ENCODE measurements at regions of chr3 and their contacts with region 1.

Region 1: GRCh38 chr3:138417559-138417982 is 16.8 kb upstream of the ESYT3 start:
- DNase-seq: peak; percentile 70 to 79
- ATAC-seq: peak; percentile 97 to 99
- H3K4me3 ChIP-seq: no peak overlapping the region
- H3K27ac ChIP-seq: no peak overlapping the region
- H3K4me1 ChIP-seq: no peaks in the 10 kb centered on the region
- CTCF ChIP-seq: peak; percentile 73
- EP300 ChIP-seq: no peak
- POLR2A ChIP-seq: no peak
- RAD21 ChIP-seq: peak; percentile 77 to 80

Region 2: GRCh38 chr3:138199851-138200250 is 217.7 kb before region 1 on chr3:
- CTCF ChIA-PET with region 1: no interaction called
- POLR2A ChIA-PET with region 1: no interaction called
- DNase-seq: no peak
- ATAC-seq: no peak
- H3K4me3 ChIP-seq: no peak overlapping the region
- H3K27ac ChIP-seq: no peak overlapping the region
- H3K4me1 ChIP-seq: no peaks in the 10 kb centered on the region
- CTCF ChIP-seq: no peak
- EP300 ChIP-seq: no peak
- POLR2A ChIP-seq: no peak
- RAD21 ChIP-seq: no peak

Region 3: GRCh38 chr3:138348754-138349739 is 68.5 kb before region 1 on chr3:
- CTCF ChIA-PET with region 1: interaction called, 10 read pairs
- POLR2A ChIA-PET with region 1: no interaction called
- DNase-seq: peak; percentile 20 to 22
- ATAC-seq: peak; percentile 63 to 64
- H3K4me3 ChIP-seq: peak overlapping the region; percentile 65
- H3K27ac ChIP-seq: peak overlapping the region; percentile 70 to 91
- H3K4me1 ChIP-seq: peaks cover 6% of the 10 kb centered on the region; the same call in 1 of the 3 replicates
- CTCF ChIP-seq: no peak
- EP300 ChIP-seq: no peak
- POLR2A ChIP-seq: no peak
- RAD21 ChIP-seq: no peak

Region 4: DNA sequence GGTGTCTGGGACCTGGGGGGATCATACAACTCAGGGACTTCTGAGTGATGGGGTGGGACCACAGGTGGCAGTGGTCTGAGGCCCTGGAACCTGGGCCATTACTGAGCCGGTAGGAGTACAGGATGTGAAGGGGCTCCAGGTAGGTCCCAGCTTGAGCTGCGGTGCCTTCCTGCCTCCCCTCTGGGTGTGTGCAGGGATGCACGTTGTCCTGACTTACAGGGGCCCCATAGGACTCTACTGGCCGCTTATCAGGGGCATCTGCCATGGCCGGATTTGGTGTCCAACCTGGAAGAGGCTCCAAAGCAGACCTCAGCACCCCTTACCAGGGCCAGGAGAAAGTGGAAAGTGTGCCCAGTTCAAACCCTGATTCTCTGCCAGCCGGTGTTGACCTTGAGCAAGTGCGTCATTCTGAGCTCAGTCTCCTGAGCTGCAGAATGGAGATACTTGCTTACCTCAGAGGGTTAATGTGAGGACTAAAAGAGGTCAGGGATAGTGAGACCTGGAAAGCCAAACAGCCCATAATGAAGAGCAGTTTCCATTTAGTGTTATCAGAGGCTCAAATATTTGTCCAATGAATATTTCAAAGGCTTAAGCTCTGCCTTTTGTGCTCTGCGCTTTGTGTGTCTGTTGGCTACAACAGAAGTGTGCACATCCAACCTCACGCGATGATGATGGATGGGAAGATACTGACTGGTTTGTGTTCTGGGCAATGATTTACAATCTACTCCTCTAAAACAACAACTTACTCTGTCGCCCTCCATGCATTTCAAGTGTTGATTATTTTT is 18.6 kb before region 1 on chr3:
- CTCF ChIA-PET with region 1: interaction called, 12 read pairs
- POLR2A ChIA-PET with region 1: no interaction called
- DNase-seq: peak in 1 of 2 experiments; percentile 9
- ATAC-seq: peak in 1 of 2 experiments; percentile 23; a peak in 1 of 6 replicates
- H3K4me3 ChIP-seq: no peak overlapping the region
- H3K27ac ChIP-seq: no peak overlapping the region
- H3K4me1 ChIP-seq: no peaks in the 10 kb centered on the region
- CTCF ChIP-seq: no peak
- EP300 ChIP-seq: no peak
- POLR2A ChIP-seq: no peak
- RAD21 ChIP-seq: no peak

Region 5: GRCh38 chr3:138432576-138433240 is 15.1 kb after region 1 on chr3:
- CTCF ChIA-PET with region 1: interaction called, 18 read pairs
- POLR2A ChIA-PET with region 1: interaction called, 4 read pairs
- DNase-seq: no peak
- ATAC-seq: no peak
- H3K4me3 ChIP-seq: no peak overlapping the region
- H3K27ac ChIP-seq: no peak overlapping the region
- H3K4me1 ChIP-seq: peaks cover 7% of the 10 kb centered on the region; the same call in 1 of the 3 replicates
- CTCF ChIP-seq: no peak
- EP300 ChIP-seq: no peak
- POLR2A ChIP-seq: no peak
- RAD21 ChIP-seq: no peak

Region 6: GRCh38 chr3:138440121-138440551 is 22.6 kb after region 1 on chr3:
- CTCF ChIA-PET with region 1: interaction called, 18 read pairs
- POLR2A ChIA-PET with region 1: no interaction called
- DNase-seq: no peak
- ATAC-seq: no peak
- H3K4me3 ChIP-seq: no peak overlapping the region
- H3K27ac ChIP-seq: peak overlapping the region in 1 of 2 experiments; percentile 28; a peak in 1 of 6 replicates
- H3K4me1 ChIP-seq: peaks cover 29% of the 10 kb centered on the region
- CTCF ChIP-seq: no peak
- EP300 ChIP-seq: no peak
- POLR2A ChIP-seq: no peak
- RAD21 ChIP-seq: no peak

Region 7: GRCh38 chr3:138455801-138456716 is 38.5 kb after region 1 on chr3:
- CTCF ChIA-PET with region 1: interaction called, 10 read pairs
- POLR2A ChIA-PET with region 1: no interaction called
- DNase-seq: no peak
- ATAC-seq: no peak
- H3K4me3 ChIP-seq: no peak overlapping the region
- H3K27ac ChIP-seq: no peak overlapping the region
- H3K4me1 ChIP-seq: no peaks in the 10 kb centered on the region
- CTCF ChIP-seq: no peak
- EP300 ChIP-seq: no peak
- POLR2A ChIP-seq: no peak
- RAD21 ChIP-seq: no peak